ENCODE measurements at regions of chr16 and their contacts with region 1.

Region 1: GRCh38 chr16:2507052-2507659 is 6.6 kb upstream of the ATP6V0C start:
- DNase-seq: peak; percentile 89
- ATAC-seq: peak; percentile 91
- H3K4me3 ChIP-seq: peak overlapping the region in 2 of 5 experiments; percentile 1 to 12
- H3K4me3 Mint-ChIP-seq: peak overlapping the region; percentile 56
- H3K27ac ChIP-seq: peak overlapping the region; percentile 83 to 100
- H3K27ac Mint-ChIP-seq: peak overlapping the region; percentile 93
- H3K4me1 ChIP-seq: peaks cover 54 to 60% of the 10 kb centered on the region in 2 donors
- H3K4me1 Mint-ChIP-seq: peaks cover 60% of the 10 kb centered on the region
- H3K27me3 ChIP-seq: no peaks in the 10 kb centered on the region
- H3K27me3 Mint-ChIP-seq: no peaks in the 10 kb centered on the region
- CTCF ChIP-seq: peak; percentile 64

Region 2: DNA sequence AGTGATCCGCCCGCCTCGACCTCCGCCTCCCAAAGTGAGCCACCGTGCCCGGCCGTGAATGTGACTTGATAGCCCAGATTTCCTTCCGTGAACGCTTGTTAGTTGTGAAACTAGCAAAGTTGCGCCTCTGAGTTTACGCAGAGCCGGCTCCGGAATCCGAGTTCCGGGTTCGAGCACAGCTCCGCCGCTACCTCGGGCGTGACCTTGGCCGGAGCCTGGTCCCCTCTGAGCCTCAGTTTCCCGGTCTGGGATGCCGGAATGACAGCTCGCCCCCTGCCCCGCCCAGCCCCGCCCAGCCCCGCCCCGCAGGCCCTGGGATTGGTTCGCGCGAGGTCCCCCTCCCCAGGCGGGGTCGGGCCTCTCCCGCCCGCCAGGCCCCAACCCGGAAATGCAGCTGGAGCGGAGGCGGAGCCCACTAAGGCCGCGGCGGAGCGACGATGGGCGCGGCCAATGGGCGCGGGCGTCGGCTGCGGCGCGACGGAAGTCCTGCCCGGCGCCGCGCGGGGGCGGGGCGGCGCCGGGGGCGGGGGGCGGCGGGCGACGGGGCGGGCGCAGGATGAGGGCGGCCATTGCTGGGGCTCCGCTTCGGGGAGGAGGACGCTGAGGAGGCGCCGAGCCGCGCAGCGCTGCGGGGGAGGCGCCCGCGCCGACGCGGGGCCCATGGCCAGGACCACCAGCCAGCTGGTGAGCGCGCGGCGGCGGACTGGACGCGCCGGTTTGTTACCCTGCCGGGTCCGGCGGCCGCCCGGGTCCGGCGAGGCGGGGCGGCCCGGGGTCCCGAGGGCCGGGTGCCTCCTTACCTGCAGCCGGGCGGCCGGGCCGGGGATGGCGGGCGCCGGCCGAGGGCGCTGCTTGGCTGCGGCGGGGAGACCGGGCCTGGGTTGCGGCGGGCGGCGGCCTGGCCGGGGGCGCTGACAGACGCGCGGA is 30.6 kb after region 1 on chr16 and contains the start of gene PDPK1:
- CTCF ChIA-PET with region 1: interaction called, 11 read pairs
- POLR2A ChIA-PET with region 1: interaction called, 5 read pairs
- intact Hi-C with region 1: loop called (anchors 1 kb)
- DNase-seq: peak; percentile 96
- ATAC-seq: peak; percentile 89
- H3K4me3 ChIP-seq: peak within 1 kb of the TSS; percentile 47 to 68 (median 64)
- H3K4me3 Mint-ChIP-seq: peak within 1 kb of the TSS; percentile 89
- H3K27ac ChIP-seq: peak within 1 kb of the TSS; percentile 73 to 77
- H3K27ac Mint-ChIP-seq: peak within 1 kb of the TSS; percentile 92
- H3K4me1 ChIP-seq: peaks cover 33 to 49% of the 10 kb centered on the region in 2 donors
- H3K4me1 Mint-ChIP-seq: peaks cover 41% of the 10 kb centered on the region
- H3K27me3 ChIP-seq: no peaks in the 10 kb centered on the region
- H3K27me3 Mint-ChIP-seq: no peaks in the 10 kb centered on the region
- CTCF ChIP-seq: no peak
- total RNA-seq, gene PDPK1: 84.1 and 86.0 TPM in 2 replicates

Measured in B cell (primary cell).